ENCODE measurements at regions of chr4 and their contacts with region 1.

Region 1: DNA sequence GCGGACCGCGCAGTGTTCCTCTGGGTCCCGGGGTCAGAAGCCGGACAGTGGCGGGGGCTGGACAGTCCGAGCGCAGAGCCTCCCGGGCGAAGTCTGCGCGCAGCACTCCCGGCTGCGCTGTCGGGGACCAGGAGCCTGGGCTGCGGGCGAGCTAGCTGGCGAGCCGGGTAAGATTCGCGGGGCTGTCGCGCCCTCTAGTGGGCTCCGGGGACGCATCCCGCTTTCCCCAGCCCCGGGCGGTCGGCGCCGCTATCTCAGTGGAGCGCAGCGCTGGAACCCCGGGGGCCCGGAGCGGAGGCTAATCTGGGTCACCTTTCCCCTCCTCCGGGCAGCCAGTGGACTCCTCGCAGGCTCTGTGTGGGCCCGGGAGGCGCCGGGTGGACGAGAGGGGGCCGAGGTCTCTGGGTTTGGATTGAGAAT is 4.2 kb downstream of the PDGFRA start:
- DNase-seq: no peak
- H3K4me3 ChIP-seq: peak overlapping the region; percentile 93
- CTCF ChIP-seq: peak; percentile 86

Region 2: DNA sequence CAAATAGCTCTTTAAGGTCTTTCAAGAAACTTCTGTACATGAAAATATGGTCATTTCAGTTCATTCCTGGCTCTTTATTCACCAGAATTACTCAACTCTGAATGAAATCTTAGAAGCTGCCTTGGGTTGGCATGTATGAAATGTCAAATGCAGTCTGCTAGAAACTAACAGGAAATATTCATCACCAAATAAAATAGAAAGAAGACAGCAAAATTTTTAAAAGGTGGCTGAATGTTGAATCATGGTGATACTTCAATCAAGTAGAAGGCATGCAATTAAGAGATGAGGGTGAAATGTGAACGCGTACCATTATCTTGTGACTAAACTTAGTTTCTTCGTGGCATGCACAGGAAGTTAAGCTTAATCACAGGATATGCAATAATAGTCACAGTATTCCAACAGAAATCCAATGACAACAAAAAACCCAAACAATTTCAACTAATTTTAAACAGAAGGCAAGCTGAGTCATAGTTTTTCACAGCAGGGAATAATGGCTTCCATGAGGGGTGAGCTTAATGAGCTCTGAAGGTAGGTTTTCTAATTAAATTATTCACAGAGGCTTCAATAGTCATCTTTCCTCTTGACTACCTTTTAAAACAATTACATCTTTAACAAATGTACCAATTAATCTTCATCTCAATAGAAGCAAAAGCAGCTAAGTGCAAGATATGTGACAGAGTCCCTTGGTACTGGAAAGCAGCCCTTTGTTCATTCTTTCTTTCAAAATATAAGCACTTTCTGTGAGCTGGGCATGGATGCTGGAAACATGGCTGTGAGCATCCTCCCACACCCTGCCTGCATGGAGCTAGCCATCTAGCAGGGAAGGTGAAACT is 911.9 kb before region 1 on chr4:
- CTCF ChIA-PET with region 1: interaction called, 14 read pairs
- POLR2A ChIA-PET with region 1: interaction called, 4 read pairs
- DNase-seq: peak; percentile 83
- H3K4me3 ChIP-seq: peak overlapping the region; percentile 33
- CTCF ChIP-seq: no peak

Region 3: DNA sequence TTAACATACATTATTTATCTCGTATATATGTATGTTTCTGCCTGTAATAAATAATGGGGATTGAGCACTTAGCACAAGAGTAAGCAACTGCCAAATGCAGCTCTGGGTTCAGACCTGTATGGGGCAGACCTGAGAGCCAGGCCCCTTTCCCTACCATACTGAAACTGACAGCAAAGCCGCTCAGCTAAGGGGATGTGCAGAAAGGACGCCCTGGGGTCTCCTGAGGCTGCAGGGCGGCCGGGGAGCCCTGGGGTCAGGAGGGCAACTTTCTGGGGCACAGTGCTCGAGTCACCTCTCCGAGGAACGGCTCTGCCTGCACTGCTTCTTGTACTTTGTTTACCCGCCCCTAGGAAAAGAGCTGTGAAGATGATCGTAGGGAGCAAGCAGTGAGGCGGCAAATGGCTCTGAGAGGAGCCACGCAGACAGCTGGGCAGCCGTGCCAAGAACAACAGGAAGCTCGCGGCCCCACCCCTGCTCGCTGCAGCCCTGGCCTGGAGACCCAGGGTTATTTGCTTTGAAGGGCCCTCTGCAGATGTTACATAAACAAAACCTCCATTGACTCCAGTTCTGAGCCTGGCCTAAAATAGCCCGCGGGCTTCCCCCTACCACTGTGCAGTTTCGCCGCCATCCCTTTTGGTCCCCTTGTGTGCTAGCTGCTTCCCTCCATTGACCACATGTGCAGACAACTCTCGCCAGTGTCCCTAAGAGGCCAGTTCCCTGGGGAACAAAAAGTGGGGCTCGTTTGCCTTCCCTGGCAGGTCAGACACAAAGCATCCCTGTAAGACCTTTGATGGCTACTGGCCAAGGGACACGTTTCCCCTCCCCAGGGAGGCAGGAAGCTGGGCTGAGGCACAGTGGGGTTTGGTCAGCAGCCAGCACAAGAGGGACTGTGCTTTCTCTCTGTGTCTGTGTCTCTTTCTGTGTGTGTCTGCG is 530.7 kb before region 1 on chr4:
- CTCF ChIA-PET with region 1: interaction called, 16 read pairs
- POLR2A ChIA-PET with region 1: interaction called, 4 read pairs
- DNase-seq: no peak
- H3K4me3 ChIP-seq: peak overlapping the region; percentile 3; the same call in 1 of the 2 replicates
- CTCF ChIP-seq: no peak

Region 4: DNA sequence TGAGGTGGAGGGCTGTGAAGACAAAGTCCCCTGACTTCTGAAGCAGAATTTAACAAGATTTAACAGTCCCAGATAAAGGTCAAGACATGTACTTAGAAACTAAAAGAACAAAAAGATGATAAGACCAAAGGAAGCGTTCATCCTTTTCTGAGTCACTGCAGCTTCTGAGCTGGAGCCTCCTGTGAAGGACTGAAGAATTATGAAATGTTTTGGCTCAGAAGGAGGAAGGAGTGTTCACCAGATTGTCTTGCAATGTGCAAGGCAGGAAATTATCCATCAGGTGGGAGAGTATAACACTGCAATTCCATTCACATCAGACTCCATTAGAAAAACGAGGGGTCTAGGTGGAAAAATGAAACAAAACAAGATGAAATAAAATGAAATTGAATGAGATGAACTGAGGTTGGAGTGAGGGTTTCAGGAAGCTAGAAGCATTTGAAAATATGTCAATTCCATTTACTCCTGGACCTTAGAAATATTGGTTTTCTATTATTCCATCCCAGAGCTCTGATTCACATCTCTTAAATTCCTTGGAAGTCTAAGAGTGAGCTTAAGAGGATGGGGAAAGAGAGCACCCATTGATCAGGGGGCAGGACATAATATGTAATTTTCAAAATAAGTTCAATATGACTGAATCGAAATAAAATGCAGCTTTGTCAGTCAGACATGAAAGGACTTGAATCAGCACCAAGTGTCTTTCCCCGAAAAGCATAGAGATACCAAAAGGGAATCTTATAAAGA is 455.9 kb before region 1 on chr4:
- CTCF ChIA-PET with region 1: interaction called, 10 read pairs
- POLR2A ChIA-PET with region 1: no interaction called
- DNase-seq: no peak
- H3K4me3 ChIP-seq: no peak overlapping the region
- CTCF ChIP-seq: no peak

Region 5: DNA sequence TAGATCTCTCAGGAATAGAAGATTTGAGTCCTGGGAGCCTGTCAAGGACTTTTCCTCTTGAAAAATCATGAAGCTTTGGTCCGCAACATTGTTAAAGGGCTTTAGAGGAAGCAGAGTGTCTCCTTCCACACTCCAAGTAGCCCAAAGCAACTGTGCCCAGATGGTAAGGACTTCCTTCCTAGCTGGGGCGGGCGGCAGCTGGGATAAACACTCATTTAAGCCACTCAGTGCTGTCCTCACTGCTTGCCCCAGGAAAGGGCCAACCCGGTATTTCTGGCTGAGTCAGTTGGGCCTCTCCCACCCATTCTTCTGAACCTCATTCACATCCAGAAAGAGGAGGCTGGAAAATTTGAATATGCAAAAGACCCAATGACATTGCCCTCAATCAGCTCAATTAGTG is 313.2 kb before region 1 on chr4:
- CTCF ChIA-PET with region 1: interaction called, 36 read pairs
- POLR2A ChIA-PET with region 1: no interaction called
- DNase-seq: no peak
- H3K4me3 ChIP-seq: no peak overlapping the region
- CTCF ChIP-seq: no peak

Region 6: GRCh38 chr4:54255876-54256275 is 22.6 kb after region 1 on chr4:
- CTCF ChIA-PET with region 1: interaction called, 10 read pairs
- POLR2A ChIA-PET with region 1: no interaction called
- DNase-seq: no peak
- H3K4me3 ChIP-seq: no peak overlapping the region
- CTCF ChIP-seq: no peak